ENCODE measurements at regions of chr2 and their contacts with region 1.

Region 1: GRCh38 chr2:230798769-230799399 is 65.9 kb upstream of the ITM2C start:
- DNase-seq: peak; percentile 63
- H3K4me3 Mint-ChIP-seq: no peak overlapping the region
- H3K27ac Mint-ChIP-seq: no peak overlapping the region
- H3K4me1 Mint-ChIP-seq: peaks cover 10% of the 10 kb centered on the region
- H3K27me3 Mint-ChIP-seq: no peaks in the 10 kb centered on the region
- CTCF ChIP-seq: peak; percentile 38

Region 2: DNA sequence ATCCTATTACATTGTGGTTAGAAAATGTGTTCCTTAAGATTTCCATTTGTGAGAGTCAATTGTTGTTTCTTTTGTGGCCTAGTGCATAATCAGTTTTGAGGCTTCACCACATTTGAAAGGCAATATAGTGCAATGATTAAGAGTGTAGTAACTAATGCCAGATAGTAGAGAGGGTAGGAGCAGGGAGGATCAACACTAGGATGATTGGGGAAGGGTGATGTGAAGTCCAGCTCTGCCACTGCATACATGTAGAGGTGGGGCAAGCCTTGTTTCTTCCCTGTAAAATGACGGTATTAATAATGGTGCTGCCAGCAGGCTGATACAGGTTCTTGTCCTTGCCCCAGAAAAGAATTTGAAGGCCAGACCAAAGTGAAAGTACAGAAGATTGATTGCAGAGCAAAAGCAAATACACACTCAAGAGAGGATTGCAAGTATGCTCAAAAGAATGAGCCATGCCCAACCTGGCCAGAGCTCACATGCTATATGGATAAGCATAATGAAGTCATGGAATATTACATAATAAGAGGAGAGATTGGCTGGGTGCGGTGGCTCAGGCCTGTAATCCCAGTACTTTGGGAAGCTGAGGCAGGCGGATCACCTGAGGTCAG is 374.9 kb before region 1 on chr2:
- CTCF ChIA-PET with region 1: no interaction called
- intact Hi-C with region 1: loop called (anchors 10 kb)
- DNase-seq: peak; percentile 44
- H3K4me3 Mint-ChIP-seq: peak overlapping the region; percentile 42
- H3K27ac Mint-ChIP-seq: peak overlapping the region; percentile 74
- H3K4me1 Mint-ChIP-seq: peaks cover 59% of the 10 kb centered on the region
- H3K27me3 Mint-ChIP-seq: no peaks in the 10 kb centered on the region
- CTCF ChIP-seq: no peak

Region 3: GRCh38 chr2:230712443-230713330 is 86.2 kb before region 1 on chr2 and contains the start of gene CAB39:
- CTCF ChIA-PET with region 1: interaction called, 16 read pairs
- intact Hi-C with region 1: loop called (anchors 2 kb)
- DNase-seq: peak; percentile 92
- H3K4me3 Mint-ChIP-seq: peak within 1 kb of the TSS; percentile 94
- H3K27ac Mint-ChIP-seq: peak within 1 kb of the TSS; percentile 90
- H3K4me1 Mint-ChIP-seq: peaks cover 28% of the 10 kb centered on the region
- H3K27me3 Mint-ChIP-seq: no peaks in the 10 kb centered on the region
- CTCF ChIP-seq: peak; percentile 74
- total RNA-seq, gene CAB39: 84.9 and 88.7 TPM in 2 replicates

Region 4: DNA sequence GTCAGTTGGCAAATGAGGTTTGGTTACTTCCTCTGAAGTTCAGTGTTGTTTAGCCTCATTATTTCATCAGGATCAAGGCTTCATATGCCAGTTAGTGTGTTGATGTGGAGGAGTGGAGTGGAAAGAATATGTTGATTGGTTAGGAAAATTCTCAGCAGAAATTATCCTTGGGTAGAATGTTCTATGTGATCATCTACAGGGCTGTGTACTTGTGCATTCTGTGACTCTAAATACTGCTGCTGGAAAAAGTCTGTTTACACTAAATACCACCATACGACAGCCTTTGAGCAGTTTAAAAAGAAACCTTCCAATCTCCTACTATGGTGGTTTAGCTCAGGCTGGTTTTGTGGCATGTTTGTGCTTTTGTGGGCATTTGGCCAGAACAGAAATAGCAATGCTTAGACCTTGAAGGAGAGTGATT is 60.5 kb before region 1 on chr2:
- CTCF ChIA-PET with region 1: interaction called, 4 read pairs
- intact Hi-C with region 1: loop called (anchors 2 kb)
- DNase-seq: no peak
- H3K4me3 Mint-ChIP-seq: peak overlapping the region; percentile 38
- H3K27ac Mint-ChIP-seq: peak overlapping the region; percentile 16
- H3K4me1 Mint-ChIP-seq: peaks cover 53% of the 10 kb centered on the region
- H3K27me3 Mint-ChIP-seq: no peaks in the 10 kb centered on the region
- CTCF ChIP-seq: no peak

Region 5: DNA sequence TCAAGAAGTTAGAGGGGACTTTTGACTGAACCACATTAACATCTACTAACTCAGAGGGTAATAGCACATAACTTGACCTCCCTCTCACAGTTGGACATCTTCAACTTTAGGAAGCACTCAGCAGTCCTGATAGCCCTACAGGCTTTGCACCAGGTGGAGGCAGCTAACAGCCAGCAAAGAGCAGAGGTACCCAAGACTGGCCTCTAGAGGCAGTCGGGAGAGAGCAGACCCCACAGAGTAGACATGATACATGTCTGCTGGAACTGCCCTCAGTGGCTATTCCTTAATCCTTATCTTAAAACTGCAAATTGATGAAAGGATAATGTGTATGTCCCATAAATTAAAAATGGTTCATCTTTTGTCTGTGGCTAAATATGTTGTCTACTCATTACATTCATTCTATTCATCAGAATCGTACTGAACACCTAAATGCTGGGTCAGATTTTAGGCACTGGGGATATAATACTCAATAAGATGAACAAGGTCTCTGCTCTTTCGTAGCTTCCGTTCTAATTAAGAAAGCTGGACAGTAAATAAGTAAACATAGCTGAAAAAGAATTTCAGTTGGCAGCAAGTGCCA is 36.5 kb before region 1 on chr2:
- CTCF ChIA-PET with region 1: interaction called, 5 read pairs
- intact Hi-C with region 1: loop called (anchors 2 kb)
- DNase-seq: peak; percentile 62
- H3K4me3 Mint-ChIP-seq: no peak overlapping the region
- H3K27ac Mint-ChIP-seq: no peak overlapping the region
- H3K4me1 Mint-ChIP-seq: peaks cover 48% of the 10 kb centered on the region
- H3K27me3 Mint-ChIP-seq: no peaks in the 10 kb centered on the region
- CTCF ChIP-seq: peak; percentile 56

Measured in Calu3 (cell line).